ENCODE measurements at regions of chr10 and their contacts with region 1.

Region 1: GRCh38 chr10:102420810-102421644 is at the start of gene FBXL15:
- DNase-seq: peak; percentile 97
- H3K4me3 Mint-ChIP-seq: peak within 1 kb of the TSS; percentile 87
- H3K27ac Mint-ChIP-seq: peak within 1 kb of the TSS; percentile 90
- H3K4me1 Mint-ChIP-seq: peaks cover 40% of the 10 kb centered on the region
- H3K27me3 Mint-ChIP-seq: peaks cover 18% of the 10 kb centered on the region
- total RNA-seq, gene FBXL15: 13.5 to 14.3 TPM

Region 2: DNA sequence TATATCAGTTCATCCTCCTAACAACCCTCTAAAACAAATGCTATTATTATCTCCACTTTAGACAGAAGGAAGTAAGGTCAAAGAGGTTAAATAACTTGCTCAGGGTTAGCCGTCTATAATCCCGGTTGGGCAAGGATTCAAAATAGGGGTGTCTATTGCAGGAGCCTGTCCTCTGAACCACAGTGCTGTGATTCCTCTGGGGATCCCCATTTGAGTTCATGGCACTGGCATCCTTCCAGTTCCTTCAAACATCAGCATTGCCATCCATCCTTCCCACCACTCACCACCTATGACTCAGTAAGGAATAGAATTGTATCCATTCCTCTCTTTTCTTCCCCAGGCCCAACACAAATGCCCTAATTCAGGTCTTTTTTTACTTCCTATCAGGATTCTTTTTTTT is 330.3 kb before region 1 on chr10:
- CTCF ChIA-PET with region 1: no interaction called
- POLR2A ChIA-PET with region 1: no interaction called
- DNase-seq: no peak
- H3K4me3 Mint-ChIP-seq: no peak overlapping the region
- H3K27ac Mint-ChIP-seq: no peak overlapping the region
- H3K4me1 Mint-ChIP-seq: no peaks in the 10 kb centered on the region
- H3K27me3 Mint-ChIP-seq: no peaks in the 10 kb centered on the region

Region 3: DNA sequence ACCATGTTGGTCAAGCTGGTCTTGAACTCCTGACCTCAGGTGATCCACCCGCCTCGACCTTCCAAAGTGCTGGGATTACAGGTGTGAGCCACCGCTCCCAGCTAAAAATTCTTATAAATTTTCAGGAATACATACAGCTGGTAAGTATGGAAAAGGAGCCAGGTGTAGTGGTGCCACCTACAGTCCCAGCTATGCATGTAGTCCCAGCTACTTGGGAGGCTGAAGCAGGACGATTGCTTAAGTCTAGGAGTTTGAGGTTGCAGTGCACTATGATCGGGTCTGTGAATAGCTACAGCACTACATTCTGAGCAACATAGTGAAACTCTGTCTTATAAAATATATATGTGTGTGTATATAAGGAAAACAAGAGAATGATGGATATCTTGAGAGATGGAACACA is 319.9 kb before region 1 on chr10:
- CTCF ChIA-PET with region 1: no interaction called
- POLR2A ChIA-PET with region 1: no interaction called
- DNase-seq: no peak
- H3K4me3 Mint-ChIP-seq: no peak overlapping the region
- H3K27ac Mint-ChIP-seq: no peak overlapping the region
- H3K4me1 Mint-ChIP-seq: peaks cover 18% of the 10 kb centered on the region
- H3K27me3 Mint-ChIP-seq: no peaks in the 10 kb centered on the region

Region 4: GRCh38 chr10:102408728-102409603 is 12.1 kb before region 1 on chr10:
- CTCF ChIA-PET with region 1: interaction called, 17 read pairs
- POLR2A ChIA-PET with region 1: interaction called, 18 read pairs
- DNase-seq: peak; percentile 49
- H3K4me3 Mint-ChIP-seq: peak overlapping the region; percentile 58
- H3K27ac Mint-ChIP-seq: no peak overlapping the region
- H3K4me1 Mint-ChIP-seq: peaks cover 29% of the 10 kb centered on the region
- H3K27me3 Mint-ChIP-seq: peaks cover 40% of the 10 kb centered on the region

Region 5: DNA sequence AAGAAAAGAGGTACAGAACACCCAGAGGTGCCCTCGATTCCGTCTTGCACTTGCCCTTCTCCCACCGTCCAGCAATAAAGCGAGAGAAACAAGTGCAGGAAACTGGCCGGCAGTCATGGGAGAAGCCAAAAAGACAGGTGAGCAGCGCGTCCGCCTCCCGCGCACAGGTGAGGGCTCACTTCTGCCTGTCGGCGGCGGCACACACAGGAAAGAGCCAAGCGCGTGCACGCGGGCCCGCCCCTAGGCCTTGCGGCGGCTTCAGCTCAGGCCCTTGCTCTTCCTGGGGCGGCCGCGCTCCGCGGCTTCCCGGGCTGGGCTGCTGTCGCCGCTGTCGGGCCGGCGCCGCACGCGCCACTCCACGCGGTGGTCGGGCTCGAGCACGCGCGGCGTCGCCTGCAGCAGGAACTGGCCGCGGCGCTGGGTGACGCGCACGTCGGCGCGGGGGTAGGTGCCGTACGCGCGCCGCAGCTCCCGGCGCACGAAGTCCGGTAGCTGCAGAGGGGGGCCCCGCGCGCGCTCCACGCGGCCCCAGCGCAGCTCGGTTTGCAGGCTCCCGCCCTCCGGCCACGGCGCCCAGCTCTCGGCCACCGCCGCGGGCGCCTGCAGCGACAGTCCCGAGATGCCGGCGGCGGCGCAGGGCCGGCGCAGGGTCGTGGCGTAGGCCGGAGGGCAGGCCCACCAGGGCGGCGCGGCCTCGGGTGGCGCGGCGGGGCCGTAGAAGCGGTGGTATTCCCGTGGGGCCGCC is 29.3 kb after region 1 on chr10:
- CTCF ChIA-PET with region 1: interaction called, 9 read pairs
- POLR2A ChIA-PET with region 1: interaction called, 79 read pairs
- DNase-seq: peak; percentile 92
- H3K4me3 Mint-ChIP-seq: peak overlapping the region; percentile 95
- H3K27ac Mint-ChIP-seq: peak overlapping the region; percentile 92
- H3K4me1 Mint-ChIP-seq: peaks cover 43% of the 10 kb centered on the region
- H3K27me3 Mint-ChIP-seq: no peaks in the 10 kb centered on the region

Region 6: DNA sequence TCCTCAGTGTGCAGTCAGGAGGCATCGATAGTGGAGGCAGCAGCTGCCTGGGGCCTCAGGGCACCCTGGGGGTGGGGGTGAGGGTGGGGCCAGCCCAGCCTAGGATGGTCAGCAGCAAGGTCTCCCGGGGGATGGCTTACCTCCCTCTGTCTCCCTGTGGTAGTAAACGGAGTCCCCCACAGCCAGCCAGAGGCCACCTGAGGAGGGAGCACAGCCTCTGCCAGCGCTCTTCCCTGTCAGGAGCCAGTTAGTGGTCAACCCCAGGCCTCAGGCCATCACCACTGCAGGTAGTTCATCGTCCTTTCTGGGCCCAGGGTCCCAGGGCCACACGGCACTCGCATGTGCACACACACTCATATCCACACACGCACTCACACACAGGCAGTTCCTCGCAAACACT is 59.4 kb after region 1 on chr10:
- CTCF ChIA-PET with region 1: interaction called, 17 read pairs
- POLR2A ChIA-PET with region 1: interaction called, 4 read pairs
- DNase-seq: no peak
- H3K4me3 Mint-ChIP-seq: no peak overlapping the region
- H3K27ac Mint-ChIP-seq: no peak overlapping the region
- H3K4me1 Mint-ChIP-seq: peaks cover 4% of the 10 kb centered on the region
- H3K27me3 Mint-ChIP-seq: no peaks in the 10 kb centered on the region